ENCODE measurements at regions of chr9 and their contacts with region 1.

Region 1: GRCh38 chr9:136769710-136770191 is 5.4 kb upstream of the LCN15 start:
- DNase-seq: peak in 7 of 9 experiments; percentile 32 to 69 (median 61)
- ATAC-seq: peak; percentile 85
- H3K4me3 ChIP-seq: no peak overlapping the region
- H3K4me3 Mint-ChIP-seq: no peak overlapping the region
- H3K27ac ChIP-seq: no peak overlapping the region
- H3K27ac Mint-ChIP-seq: no peak overlapping the region
- H3K4me1 ChIP-seq: no peaks in the 10 kb centered on the region
- H3K4me1 Mint-ChIP-seq: peaks cover 10% of the 10 kb centered on the region
- H3K27me3 ChIP-seq: peaks cover 0 to 4% of the 10 kb centered on the region in 2 experiments
- H3K27me3 Mint-ChIP-seq: peaks cover 13% of the 10 kb centered on the region
- CTCF ChIP-seq: peak; percentile 30

Region 2: DNA sequence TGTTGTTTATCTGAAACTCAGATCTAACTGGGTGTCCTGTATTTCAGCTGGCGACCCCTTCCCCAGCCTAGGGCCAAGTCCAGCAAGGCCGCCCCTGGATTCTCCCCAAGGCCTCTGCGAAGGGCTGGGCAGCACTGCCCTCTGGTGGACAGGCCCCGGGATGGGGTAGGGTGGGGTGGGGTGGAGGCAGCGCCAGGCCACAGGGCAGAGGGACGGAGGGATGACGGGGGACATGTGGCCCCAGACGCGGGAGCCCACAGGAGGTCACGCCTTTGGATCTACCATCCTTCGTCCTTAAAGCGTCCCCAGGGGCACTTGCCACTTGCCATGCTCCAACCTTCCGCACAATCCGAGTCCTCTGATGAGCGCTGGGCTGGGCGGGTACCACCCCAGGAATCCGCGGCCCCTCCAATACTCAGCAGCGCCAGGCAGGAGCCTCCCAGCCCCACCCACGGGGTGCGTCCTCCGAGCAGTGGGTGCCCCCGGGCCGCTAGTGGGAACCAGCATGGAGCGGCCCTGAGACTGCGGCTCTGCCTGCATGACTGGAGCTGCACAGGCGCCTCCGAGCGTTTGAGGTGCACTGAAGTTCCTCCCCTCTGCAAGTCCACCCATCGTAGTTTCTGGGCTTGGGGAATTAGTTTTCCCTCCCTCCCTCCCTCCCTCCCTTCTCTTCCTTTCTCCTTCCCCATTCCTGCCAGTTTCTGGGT is 75.4 kb before region 1 on chr9:
- CTCF ChIA-PET with region 1: no interaction called
- POLR2A ChIA-PET with region 1: no interaction called
- intact Hi-C with region 1: no loop called
- DNase-seq: peak in 3 of 9 experiments; percentile 20 to 40 (median 29)
- ATAC-seq: peak; percentile 23
- H3K4me3 ChIP-seq: no peak overlapping the region
- H3K4me3 Mint-ChIP-seq: no peak overlapping the region
- H3K27ac ChIP-seq: no peak overlapping the region
- H3K27ac Mint-ChIP-seq: no peak overlapping the region
- H3K4me1 ChIP-seq: peaks cover 8% of the 10 kb centered on the region
- H3K4me1 Mint-ChIP-seq: peaks cover 2% of the 10 kb centered on the region
- H3K27me3 ChIP-seq: peaks cover 0 to 5% of the 10 kb centered on the region in 2 experiments
- H3K27me3 Mint-ChIP-seq: peaks cover 8% of the 10 kb centered on the region
- CTCF ChIP-seq: peak; percentile 17

Region 3: GRCh38 chr9:136779808-136780207 is 10.1 kb after region 1 on chr9:
- CTCF ChIA-PET with region 1: interaction called, 34 read pairs
- POLR2A ChIA-PET with region 1: no interaction called
- intact Hi-C with region 1: no loop called
- DNase-seq: no peak
- ATAC-seq: no peak
- H3K4me3 ChIP-seq: no peak overlapping the region
- H3K4me3 Mint-ChIP-seq: no peak overlapping the region
- H3K27ac ChIP-seq: no peak overlapping the region
- H3K27ac Mint-ChIP-seq: no peak overlapping the region
- H3K4me1 ChIP-seq: no peaks in the 10 kb centered on the region
- H3K4me1 Mint-ChIP-seq: no peaks in the 10 kb centered on the region
- H3K27me3 ChIP-seq: no peaks in the 10 kb centered on the region
- H3K27me3 Mint-ChIP-seq: peaks cover 13% of the 10 kb centered on the region
- CTCF ChIP-seq: no peak